ENCODE measurements at regions of chr12 and their contacts with region 1.

Region 1: GRCh38 chr12:107086314-107086713 is 7.0 kb downstream of the CRY1 start:
- DNase-seq: no peak
- ATAC-seq: no peak
- H3K4me3 ChIP-seq: no peak overlapping the region
- H3K27ac ChIP-seq: no peak overlapping the region
- H3K4me1 ChIP-seq: no peaks in the 10 kb centered on the region
- H3K27me3 ChIP-seq: no peaks in the 10 kb centered on the region

Region 2: GRCh38 chr12:107053709-107054108 is 32.6 kb before region 1 on chr12:
- intact Hi-C with region 1: loop called in 1 of 2 experiments (anchors 5 kb)
- DNase-seq: no peak
- ATAC-seq: no peak
- H3K4me3 ChIP-seq: no peak overlapping the region
- H3K27ac ChIP-seq: no peak overlapping the region
- H3K4me1 ChIP-seq: no peaks in the 10 kb centered on the region
- H3K27me3 ChIP-seq: no peaks in the 10 kb centered on the region

Region 3: DNA sequence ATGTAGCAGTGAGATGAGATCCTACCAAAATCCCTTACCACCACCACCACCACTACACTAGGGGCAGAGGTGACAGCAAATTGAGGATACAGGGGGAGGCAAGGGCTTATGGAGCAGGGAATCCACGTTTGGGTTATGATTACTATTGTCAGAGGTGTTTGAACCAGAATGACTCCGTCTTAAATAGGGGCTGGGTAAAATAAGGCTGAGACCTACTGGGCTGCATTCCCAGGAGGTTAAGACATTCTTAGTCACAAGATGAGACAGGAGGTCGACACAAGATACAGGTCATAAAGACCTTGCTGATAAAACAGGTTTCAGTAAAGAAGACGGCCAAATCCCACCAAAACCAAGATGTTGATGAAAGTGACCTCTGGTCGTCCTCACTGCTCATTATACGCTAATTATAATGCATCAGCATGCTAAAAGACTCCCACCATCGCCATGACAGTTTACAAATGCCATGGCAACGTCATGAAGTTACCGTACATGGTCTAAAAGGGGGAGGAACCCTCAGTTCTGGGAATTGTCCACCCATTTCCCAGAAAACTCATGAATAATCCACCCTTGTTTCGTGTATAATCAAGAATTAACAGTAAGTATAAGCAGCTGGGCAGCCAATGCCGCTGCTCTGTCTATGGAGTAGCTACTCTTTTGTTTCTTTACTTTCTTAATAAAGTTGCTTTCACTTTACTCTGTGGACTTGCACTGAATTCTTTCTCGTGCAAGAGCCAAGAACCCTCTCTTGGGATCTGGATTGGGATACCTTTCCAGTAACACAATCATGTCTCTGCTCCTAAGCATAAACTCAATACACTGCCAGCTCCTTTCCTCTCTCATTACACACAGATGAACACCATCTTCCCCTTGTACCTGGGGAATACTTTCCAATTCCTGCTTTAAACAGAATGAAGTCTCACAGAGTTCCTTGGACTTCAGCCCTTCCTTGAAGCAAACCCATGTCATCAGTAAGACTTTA is 23.7 kb after region 1 on chr12:
- intact Hi-C with region 1: loop called in 1 of 2 experiments (anchors 1 kb)
- DNase-seq: no peak
- ATAC-seq: no peak
- H3K4me3 ChIP-seq: peak overlapping the region in 1 of 2 donors; percentile 33
- H3K27ac ChIP-seq: no peak overlapping the region
- H3K4me1 ChIP-seq: peaks cover 0 to 7% of the 10 kb centered on the region in 2 donors
- H3K27me3 ChIP-seq: no peaks in the 10 kb centered on the region

Measured in aorta (tissue), 5 donors.